Activated B cell treated with CpG ODN at 0.5 μM for 24 hours (primary cell): ENCODE measurements at regions of chr6 and their contacts with region 1.

Region 1: DNA sequence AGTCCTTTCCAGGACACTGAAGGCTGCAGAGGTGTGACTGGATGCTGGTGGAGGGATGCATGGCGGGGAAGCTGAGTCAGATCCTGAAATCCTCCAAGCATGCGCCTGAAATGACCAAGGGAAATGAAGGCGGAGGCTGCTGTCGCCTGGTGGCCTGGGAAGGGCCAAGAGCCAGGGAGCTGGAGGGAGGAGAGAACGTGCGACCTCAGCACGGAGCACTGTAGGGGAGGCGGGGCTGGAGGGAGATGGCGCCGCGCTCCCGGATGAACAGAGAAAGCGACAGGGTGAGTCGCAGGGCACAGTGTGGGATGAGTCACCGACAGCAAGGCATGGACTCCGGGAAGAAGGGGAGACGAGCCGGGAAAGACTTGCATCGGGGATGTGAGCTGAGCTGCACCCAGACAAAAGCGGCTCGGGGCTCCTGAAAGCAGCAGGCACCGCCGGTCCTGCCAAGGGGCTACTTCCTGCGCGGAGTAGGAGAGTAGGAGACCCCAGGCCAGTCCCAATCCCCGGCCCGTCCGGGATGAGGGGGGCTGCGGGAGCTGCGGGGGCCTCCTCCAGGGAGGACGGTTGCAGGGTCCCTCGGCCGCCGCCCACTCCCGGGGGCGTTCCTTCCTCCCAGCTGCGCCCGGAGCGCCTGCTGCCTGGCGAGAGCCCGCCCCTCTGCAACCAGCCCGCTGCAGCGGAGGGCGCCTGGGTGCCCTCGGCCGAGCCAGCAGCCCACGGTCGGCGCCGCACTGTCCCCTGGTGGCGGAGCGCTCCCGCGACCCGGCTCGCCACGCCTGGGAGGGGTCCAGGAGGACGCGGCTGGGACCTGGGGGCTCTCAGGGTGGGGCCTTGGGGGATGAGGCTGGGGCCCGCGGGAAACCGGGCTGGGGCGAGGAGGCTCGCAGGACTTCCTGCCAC is 11.0 kb upstream of the NQO2 start:
- DNase-seq: peak; percentile 87
- ATAC-seq: peak; percentile 83
- H3K4me3 Mint-ChIP-seq: peak overlapping the region; percentile 93
- H3K27ac Mint-ChIP-seq: peak overlapping the region; percentile 99
- H3K4me1 Mint-ChIP-seq: peaks cover 21% of the 10 kb centered on the region
- H3K27me3 Mint-ChIP-seq: peaks cover under 1% of the 10 kb centered on the region
- CTCF ChIP-seq: no peak

Region 2: GRCh38 chr6:2791124-2791974 is 197.3 kb before region 1 on chr6:
- CTCF ChIA-PET with region 1: interaction called, 62 read pairs
- POLR2A ChIA-PET with region 1: interaction called, 21 read pairs
- intact Hi-C with region 1: loop called (anchors 1 kb)
- DNase-seq: no peak
- ATAC-seq: peak; percentile 91
- H3K4me3 Mint-ChIP-seq: peak overlapping the region; percentile 72
- H3K27ac Mint-ChIP-seq: peak overlapping the region; percentile 67
- H3K4me1 Mint-ChIP-seq: peaks cover 41% of the 10 kb centered on the region
- H3K27me3 Mint-ChIP-seq: no peaks in the 10 kb centered on the region
- CTCF ChIP-seq: no peak

Region 3: GRCh38 chr6:2862712-2863181 is 125.9 kb before region 1 on chr6:
- CTCF ChIA-PET with region 1: interaction called, 6 read pairs
- POLR2A ChIA-PET with region 1: interaction called, 23 read pairs
- intact Hi-C with region 1: no loop called
- DNase-seq: no peak
- ATAC-seq: peak; percentile 56
- H3K4me3 Mint-ChIP-seq: peak overlapping the region; percentile 56
- H3K27ac Mint-ChIP-seq: peak overlapping the region; percentile 92
- H3K4me1 Mint-ChIP-seq: peaks cover 91% of the 10 kb centered on the region
- H3K27me3 Mint-ChIP-seq: no peaks in the 10 kb centered on the region
- CTCF ChIP-seq: no peak

Region 4: DNA sequence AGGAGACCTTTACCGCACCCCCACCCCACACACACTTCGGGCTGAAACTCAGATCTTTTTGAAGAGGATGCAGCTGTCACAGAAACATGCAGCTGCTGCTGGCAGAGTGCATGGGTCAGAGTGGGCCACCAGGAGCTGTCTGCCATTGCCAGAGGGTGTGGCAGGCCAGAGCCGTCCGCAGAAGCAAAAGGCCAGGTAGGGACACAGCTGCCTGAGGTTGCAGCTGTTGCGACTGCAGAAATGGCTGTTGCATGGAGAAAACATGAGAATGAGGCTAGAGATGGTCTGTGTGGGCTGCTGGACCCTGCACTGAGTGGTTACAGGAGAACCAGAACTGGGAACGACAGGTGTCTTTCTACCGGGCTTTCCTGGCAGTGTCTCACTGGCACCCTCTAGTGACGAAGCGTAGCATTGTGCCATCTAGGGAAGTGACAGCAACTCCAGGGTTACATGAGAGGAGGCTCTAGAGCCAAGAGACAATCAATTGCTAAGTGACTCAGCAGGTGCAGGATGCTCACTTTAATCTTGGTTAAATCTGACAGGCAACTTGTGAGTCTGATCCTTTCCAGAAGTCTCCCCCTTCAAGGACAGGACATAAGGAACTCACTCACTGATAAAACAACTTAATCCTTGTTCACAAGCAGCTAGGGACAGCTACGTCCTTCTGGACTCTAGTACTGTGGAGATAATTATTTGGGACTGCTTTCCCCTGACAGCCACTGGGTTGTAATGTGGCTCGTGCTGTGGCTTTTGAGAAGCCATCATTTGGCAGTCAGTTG is 56.5 kb before region 1 on chr6:
- CTCF ChIA-PET with region 1: interaction called, 53 read pairs
- POLR2A ChIA-PET with region 1: interaction called, 33 read pairs
- intact Hi-C with region 1: loop called (anchors 1 kb)
- DNase-seq: peak; percentile 72
- ATAC-seq: peak; percentile 97
- H3K4me3 Mint-ChIP-seq: peak overlapping the region; percentile 73
- H3K27ac Mint-ChIP-seq: no peak overlapping the region
- H3K4me1 Mint-ChIP-seq: peaks cover 18% of the 10 kb centered on the region
- H3K27me3 Mint-ChIP-seq: no peaks in the 10 kb centered on the region
- CTCF ChIP-seq: peak; percentile 64

Region 5: GRCh38 chr6:2999618-3000557 is 11.2 kb after region 1 on chr6 and contains the start of gene NQO2:
- CTCF ChIA-PET with region 1: interaction called, 15 read pairs
- POLR2A ChIA-PET with region 1: interaction called, 30 read pairs
- intact Hi-C with region 1: loop called (anchors 1 kb)
- DNase-seq: peak; percentile 91
- ATAC-seq: peak; percentile 88
- H3K4me3 Mint-ChIP-seq: peak within 1 kb of the TSS; percentile 90
- H3K27ac Mint-ChIP-seq: peak within 1 kb of the TSS; percentile 80
- H3K4me1 Mint-ChIP-seq: peaks cover 16% of the 10 kb centered on the region
- H3K27me3 Mint-ChIP-seq: no peaks in the 10 kb centered on the region
- CTCF ChIP-seq: no peak
- total RNA-seq, gene NQO2: 11.9 and 12.3 TPM in 2 replicates

Region 6: DNA sequence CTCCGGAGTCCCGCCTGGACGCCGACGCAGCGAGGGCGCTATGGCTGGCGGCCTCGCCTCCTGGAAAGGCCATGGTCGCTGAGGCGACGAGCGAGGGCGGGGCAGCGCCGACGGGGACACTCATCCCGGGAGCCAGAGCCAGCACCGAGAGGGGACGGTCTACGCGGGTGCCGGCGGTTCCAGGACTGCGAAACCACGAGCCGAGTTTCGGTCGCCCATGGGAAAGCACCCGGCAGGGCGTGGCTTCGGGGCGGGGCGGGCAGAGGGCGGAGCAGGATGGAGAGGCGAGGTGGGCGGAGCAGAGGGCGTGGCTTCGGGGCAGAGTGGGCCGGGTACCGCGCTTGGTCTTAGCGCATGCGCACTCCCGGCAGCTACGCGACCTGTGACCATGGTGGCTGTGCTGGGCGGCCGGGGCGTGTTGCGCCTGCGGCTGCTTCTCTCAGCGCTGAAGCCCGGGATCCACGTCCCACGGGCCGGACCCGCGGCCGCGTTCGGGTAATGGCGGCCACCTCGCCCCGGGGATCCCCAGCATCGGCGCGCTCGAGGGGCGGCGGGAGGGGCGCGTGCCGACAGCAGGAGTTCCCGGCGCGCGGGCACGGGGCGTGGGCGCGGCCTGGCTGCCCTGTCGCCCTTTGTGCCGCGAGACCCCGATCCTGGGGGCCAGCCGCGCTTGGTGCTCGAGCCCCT is 129.8 kb after region 1 on chr6 and contains the start of gene BPHL:
- CTCF ChIA-PET with region 1: no interaction called
- POLR2A ChIA-PET with region 1: interaction called, 5 read pairs
- intact Hi-C with region 1: loop called (anchors 2 kb)
- DNase-seq: peak; percentile 100
- ATAC-seq: peak; percentile 92
- H3K4me3 Mint-ChIP-seq: peak within 1 kb of the TSS; percentile 89
- H3K27ac Mint-ChIP-seq: peak within 1 kb of the TSS; percentile 93
- H3K4me1 Mint-ChIP-seq: peaks cover 16% of the 10 kb centered on the region
- H3K27me3 Mint-ChIP-seq: no peaks in the 10 kb centered on the region
- CTCF ChIP-seq: no peak
- total RNA-seq, gene BPHL: 10.5 and 11.0 TPM in 2 replicates